Lower leg skin (tissue), 4 donors: ENCODE measurements at regions of chr7 and their contacts with region 1.

Region 1: DNA sequence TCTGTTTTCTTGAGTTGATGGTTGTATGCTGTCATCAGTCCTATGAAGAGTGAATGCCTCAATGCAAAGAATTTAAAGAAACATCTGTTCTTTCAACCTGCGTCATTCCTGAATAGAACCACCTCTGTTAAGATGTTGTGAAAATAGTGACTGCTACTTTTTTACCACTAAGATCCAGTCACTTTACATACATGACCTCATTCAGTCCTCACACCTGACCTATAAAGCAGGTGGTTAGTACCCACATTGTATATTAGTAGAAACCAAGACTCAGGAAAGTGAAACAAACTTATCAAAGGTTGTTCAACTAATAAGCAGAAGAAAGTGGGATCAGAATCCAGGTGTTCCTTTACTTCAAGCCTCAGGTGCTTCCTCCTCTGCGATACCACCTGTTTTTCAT is 64.8 kb downstream of the ITGB8 start:
- DNase-seq: no peak
- H3K4me3 ChIP-seq: no peak overlapping the region
- CTCF ChIP-seq: no peak
- POLR2A ChIP-seq: no peak

Region 2: DNA sequence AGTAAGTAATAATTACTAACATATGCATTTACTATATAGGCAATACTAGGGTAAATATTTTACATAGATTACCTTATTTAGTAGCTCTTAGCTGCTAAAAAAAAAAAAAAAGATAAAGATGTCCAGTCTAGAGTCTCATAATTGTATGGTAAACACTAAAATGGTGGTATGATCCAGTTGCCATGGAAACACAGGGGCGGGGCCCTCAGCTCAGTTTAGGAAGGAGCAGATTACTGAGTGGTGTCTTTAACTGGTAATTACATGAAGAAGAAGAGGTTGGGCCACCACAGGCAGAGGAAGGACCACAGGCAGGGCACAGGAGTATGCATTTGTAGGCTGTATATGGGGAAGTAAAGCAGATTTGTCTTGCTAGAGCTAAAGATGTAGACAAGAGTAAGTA is 21.1 kb before region 1 on chr7:
- intact Hi-C with region 1: loop called (anchors 1 kb)
- DNase-seq: no peak
- H3K4me3 ChIP-seq: no peak overlapping the region
- CTCF ChIP-seq: no peak
- POLR2A ChIP-seq: no peak